K562 (cell line): ENCODE measurements at regions of chr1 and their contacts with region 1.

Region 1: DNA sequence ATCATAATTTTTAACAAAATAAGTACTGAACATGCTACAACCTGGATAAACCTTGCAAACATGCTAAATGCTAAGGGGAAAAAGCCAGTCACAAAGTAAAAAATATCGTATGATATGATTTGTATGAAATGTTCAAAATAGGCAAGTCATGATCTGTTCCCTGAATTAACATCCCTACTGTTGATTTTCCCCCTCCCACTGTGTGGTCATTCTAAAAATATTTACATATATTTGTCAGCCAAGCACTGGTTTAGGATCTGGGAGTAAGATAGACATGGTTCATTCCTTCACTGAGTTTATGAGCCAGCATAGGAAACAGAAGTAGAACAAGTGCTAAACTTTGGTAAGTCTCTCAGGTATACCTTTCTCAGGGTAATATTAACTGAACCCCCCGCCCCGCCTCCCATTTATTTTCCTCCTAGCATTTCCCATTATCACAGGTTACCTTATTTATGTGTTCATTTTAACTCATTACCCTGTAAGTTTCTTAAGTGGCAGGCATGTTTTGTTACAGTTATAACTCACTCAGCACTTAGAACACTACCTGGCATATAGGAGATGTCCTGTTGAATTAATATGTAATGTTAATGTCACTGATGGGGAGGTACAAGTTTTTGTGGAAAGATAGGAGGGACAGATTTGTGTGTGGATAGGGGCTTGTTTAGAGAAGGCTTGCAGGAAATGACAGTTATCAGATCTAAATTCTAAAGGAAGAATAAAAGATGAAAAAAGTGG is 12.3 kb downstream of the UQCRH start:
- DNase-seq: peak in 1 of 4 experiments; percentile 5
- ATAC-seq: peak; percentile 44
- H3K4me3 ChIP-seq: no peak overlapping the region
- H3K27ac ChIP-seq: peak overlapping the region; percentile 4; the same call in 1 of the 3 replicates
- H3K4me1 ChIP-seq: no peaks in the 10 kb centered on the region; a peak in 2 of 5 replicates
- H3K27me3 ChIP-seq: no peaks in the 10 kb centered on the region
- CTCF ChIP-seq: no peak
- EP300 ChIP-seq: no peak
- POLR2A ChIP-seq: peak; percentile 60
- RAD21 ChIP-seq: no peak

Region 2: GRCh38 chr1:46303038-46303871 is 12.6 kb before region 1 on chr1 and contains the starts of genes LRRC41 and UQCRH:
- CTCF ChIA-PET with region 1: no interaction called
- POLR2A ChIA-PET with region 1: interaction called, 33 read pairs
- in situ Hi-C with region 1: no loop called
- intact Hi-C with region 1: no loop called
- DNase-seq: peak; percentile 87 to 100 (median 92)
- ATAC-seq: peak; percentile 80
- H3K4me3 ChIP-seq: peak within 1 kb of the TSS; percentile 76
- H3K27ac ChIP-seq: peak within 1 kb of the TSS; percentile 96
- H3K4me1 ChIP-seq: peaks cover 36 to 44% of the 10 kb centered on the region in 2 experiments; a peak in 4 of 5 replicates
- H3K27me3 ChIP-seq: no peaks in the 10 kb centered on the region
- CTCF ChIP-seq: peak; percentile 20 to 46 (median 46); a peak in 3 of 6 replicates
- EP300 ChIP-seq: peak; percentile 15
- POLR2A ChIP-seq: peak; percentile 98
- RAD21 ChIP-seq: 0 out of 4 replicates have a peak, but pooled peaks of 1 of the 2 experiments have one; percentile 2
- polyA plus RNA-seq, gene LRRC41: 10.5 to 11.7 TPM
- polyA plus RNA-seq, gene UQCRH: 4,348 to 5,184 TPM

Region 3: GRCh38 chr1:46333300-46334029 is 17.6 kb after region 1 on chr1:
- CTCF ChIA-PET with region 1: no interaction called
- POLR2A ChIA-PET with region 1: interaction called, 20 read pairs
- in situ Hi-C with region 1: no loop called
- intact Hi-C with region 1: no loop called
- DNase-seq: peak in 2 of 4 experiments; percentile 71 to 77
- ATAC-seq: peak; percentile 98
- H3K4me3 ChIP-seq: no peak overlapping the region
- H3K27ac ChIP-seq: no peak overlapping the region
- H3K4me1 ChIP-seq: peaks cover 2 to 5% of the 10 kb centered on the region in 2 experiments; a peak in 4 of 5 replicates
- H3K27me3 ChIP-seq: no peaks in the 10 kb centered on the region
- CTCF ChIP-seq: peak; percentile 67 to 96 (median 80)
- EP300 ChIP-seq: no peak
- POLR2A ChIP-seq: no peak
- RAD21 ChIP-seq: peak; percentile 73 to 86

Region 4: DNA sequence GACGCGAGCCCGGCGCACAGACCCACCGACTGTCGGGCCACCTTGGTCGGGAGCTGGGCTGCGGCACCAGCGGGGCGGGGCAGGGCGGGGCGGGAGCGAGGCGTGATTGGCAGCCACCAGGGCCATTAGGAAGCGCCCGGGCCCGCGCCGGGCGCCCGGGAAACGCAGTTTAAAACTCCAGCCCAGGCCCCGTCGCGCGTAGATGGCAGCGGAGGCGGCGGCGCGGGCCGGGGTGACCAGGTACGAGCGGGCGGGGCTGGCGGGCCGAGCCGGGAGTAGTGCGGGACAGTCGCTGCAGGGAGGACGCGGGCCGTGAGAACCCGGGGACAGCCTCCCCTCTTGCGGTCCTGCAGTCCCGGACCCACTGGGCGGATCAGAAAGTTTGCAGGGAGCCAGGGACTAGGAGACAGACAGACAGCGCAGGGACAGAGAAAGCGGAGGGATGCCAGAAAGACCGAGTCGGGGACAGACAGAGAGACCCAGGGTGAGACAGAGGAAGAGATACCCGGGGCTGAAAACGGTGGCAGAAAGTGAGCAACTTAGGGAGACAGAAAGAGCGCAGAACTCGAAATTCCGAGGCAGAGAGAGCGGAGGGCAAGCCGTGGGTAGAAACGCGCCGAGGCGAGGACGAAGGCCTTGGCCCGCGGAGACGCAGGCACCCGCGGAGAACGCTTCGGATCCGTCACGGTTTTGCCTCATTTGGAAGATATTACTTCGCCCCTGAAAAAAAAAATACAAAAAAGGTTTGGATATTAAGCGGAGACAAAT is 174.0 kb after region 1 on chr1 and contains the start of gene DMBX1:
- CTCF ChIA-PET with region 1: no interaction called
- POLR2A ChIA-PET with region 1: no interaction called
- in situ Hi-C with region 1: no loop called
- intact Hi-C with region 1: no loop called
- DNase-seq: peak; percentile 80 to 95 (median 91)
- ATAC-seq: peak; percentile 87
- H3K4me3 ChIP-seq: peak within 1 kb of the TSS; percentile 52
- H3K27ac ChIP-seq: no peak within 1 kb of the TSS
- H3K4me1 ChIP-seq: peaks cover 5 to 66% of the 10 kb centered on the region in 2 experiments
- H3K27me3 ChIP-seq: no peaks in the 10 kb centered on the region
- CTCF ChIP-seq: no peak
- EP300 ChIP-seq: no peak
- POLR2A ChIP-seq: peak; percentile 38; the same call in 1 of the 2 replicates
- RAD21 ChIP-seq: no peak
- polyA plus RNA-seq, gene DMBX1: 0.25 to 0.37 TPM